ENCODE measurements at regions of chr5 and their contacts with region 1.

Region 1: DNA sequence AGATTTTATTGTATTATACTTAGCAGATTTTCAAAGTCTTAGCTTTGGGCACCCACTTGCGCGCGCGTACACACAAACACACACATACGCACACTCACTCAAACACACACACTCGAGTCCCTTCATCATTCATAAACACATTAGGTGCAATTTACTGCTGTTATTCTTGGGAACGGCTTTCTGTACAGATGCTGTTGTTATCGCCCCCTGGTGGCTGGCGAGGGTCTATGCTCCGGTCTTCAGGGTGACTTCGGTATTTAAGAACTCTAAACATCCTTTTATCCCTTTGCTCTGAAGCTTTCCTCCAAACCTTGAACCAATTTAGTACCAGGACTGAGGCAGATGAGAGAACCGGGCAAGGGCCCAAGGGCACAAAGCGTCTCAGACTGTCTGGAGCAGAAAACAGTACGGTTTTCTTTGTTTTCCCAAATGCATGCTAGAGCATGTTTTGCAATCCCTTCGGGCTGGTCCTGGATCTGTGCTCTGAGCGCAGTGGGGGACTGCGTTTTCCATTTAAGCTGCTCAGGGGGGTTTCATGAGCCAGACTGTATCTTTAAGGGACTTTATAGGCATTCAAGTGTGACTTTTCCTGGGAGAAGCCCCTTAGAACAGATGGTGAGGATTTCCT is 1.7 kb upstream of the SLIT3 start:
- DNase-seq: peak in 1 of 2 donors; percentile 53
- ATAC-seq: peak in 2 of 3 donors; percentile 51 to 54
- H3K4me3 ChIP-seq: no peak overlapping the region
- H3K4me3 Mint-ChIP-seq: no peak overlapping the region
- H3K27ac ChIP-seq: no peak overlapping the region
- H3K27ac Mint-ChIP-seq: no peak overlapping the region
- H3K4me1 ChIP-seq: no peaks in the 10 kb centered on the region
- H3K4me1 Mint-ChIP-seq: peaks cover 6 to 9% of the 10 kb centered on the region in 2 donors
- H3K27me3 ChIP-seq: no peaks in the 10 kb centered on the region
- H3K27me3 Mint-ChIP-seq: peaks cover 38 to 54% of the 10 kb centered on the region in 2 donors
- CTCF ChIP-seq: peak; percentile 56

Region 2: GRCh38 chr5:168679515-168679920 is 623.1 kb before region 1 on chr5:
- intact Hi-C with region 1: loop called (anchors 1 kb)
- DNase-seq: peak; percentile 38 to 77
- ATAC-seq: peak; percentile 38 to 64 (median 44)
- H3K4me3 ChIP-seq: no peak overlapping the region
- H3K4me3 Mint-ChIP-seq: no peak overlapping the region
- H3K27ac ChIP-seq: no peak overlapping the region
- H3K27ac Mint-ChIP-seq: no peak overlapping the region
- H3K4me1 ChIP-seq: peaks cover 6% of the 10 kb centered on the region
- H3K4me1 Mint-ChIP-seq: peaks cover 0 to 5% of the 10 kb centered on the region in 2 donors
- H3K27me3 ChIP-seq: no peaks in the 10 kb centered on the region
- H3K27me3 Mint-ChIP-seq: peaks cover 0 to 5% of the 10 kb centered on the region in 2 donors
- CTCF ChIP-seq: peak; percentile 89

Region 3: GRCh38 chr5:168706655-168707069 is 595.9 kb before region 1 on chr5:
- intact Hi-C with region 1: loop called (anchors 10 kb)
- DNase-seq: no peak
- ATAC-seq: no peak
- H3K4me3 ChIP-seq: no peak overlapping the region
- H3K4me3 Mint-ChIP-seq: no peak overlapping the region
- H3K27ac ChIP-seq: no peak overlapping the region
- H3K27ac Mint-ChIP-seq: no peak overlapping the region
- H3K4me1 ChIP-seq: no peaks in the 10 kb centered on the region
- H3K4me1 Mint-ChIP-seq: no peaks in the 10 kb centered on the region
- H3K27me3 ChIP-seq: no peaks in the 10 kb centered on the region
- H3K27me3 Mint-ChIP-seq: peaks cover 0 to 8% of the 10 kb centered on the region in 2 donors
- CTCF ChIP-seq: no peak

Measured in natural killer cell (primary cell).